Caco-2 (cell line): ENCODE measurements at regions of chr12 and their contacts with region 1.

Region 1: DNA sequence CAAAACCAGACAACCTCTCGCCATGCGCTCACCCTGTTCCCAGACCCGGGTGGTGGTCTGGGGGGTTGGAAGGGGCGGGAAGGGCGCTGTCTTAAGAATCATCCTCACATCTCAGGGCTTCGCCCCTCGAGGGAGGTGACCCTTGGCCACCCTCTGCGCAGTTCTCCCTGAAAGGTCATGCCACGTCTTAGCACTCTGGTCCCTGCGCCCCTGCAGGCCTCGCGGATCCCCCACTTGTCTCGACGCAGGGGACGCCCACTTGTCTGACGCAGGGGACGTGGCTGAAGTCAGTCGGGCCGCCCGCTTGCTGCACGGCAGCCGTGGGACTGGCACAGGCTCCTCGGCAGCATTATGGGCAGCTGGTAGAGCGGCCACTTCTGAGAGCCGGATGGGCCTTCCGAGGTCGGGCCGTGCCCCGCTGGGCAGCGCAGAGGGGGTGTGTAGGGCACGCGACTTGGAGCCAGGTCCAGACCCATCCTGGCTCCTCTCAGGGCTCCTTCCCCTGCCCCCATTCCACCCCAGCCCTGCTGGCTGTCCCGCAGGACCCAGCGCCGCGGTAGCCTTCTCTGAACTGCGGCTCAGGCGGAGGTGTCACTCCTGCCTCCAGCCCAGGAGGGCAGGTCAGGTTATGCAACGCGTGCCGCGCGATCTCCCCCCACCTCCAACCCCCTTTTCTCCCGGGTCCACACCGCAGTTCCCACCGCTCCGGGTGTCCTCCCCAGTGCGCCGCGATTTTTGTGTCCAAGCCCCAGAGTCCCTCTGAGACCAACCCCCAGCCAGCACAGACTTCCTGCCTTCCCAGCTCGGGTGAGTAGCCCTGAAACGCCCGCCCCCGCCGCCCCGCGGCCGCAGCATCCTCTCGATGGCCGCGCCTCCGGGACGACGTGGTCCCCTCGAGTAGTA is 40.9 kb upstream of the CAPRIN2 start:
- DNase-seq: peak; percentile 75 to 76
- H3K4me3 ChIP-seq: peak overlapping the region; percentile 75
- H3K4me3 Mint-ChIP-seq: peak overlapping the region; percentile 80
- H3K27ac Mint-ChIP-seq: no peak overlapping the region
- H3K4me1 ChIP-seq: peaks cover 34% of the 10 kb centered on the region
- H3K4me1 Mint-ChIP-seq: peaks cover 25% of the 10 kb centered on the region
- H3K27me3 ChIP-seq: no peaks in the 10 kb centered on the region
- H3K27me3 Mint-ChIP-seq: peaks cover 3% of the 10 kb centered on the region
- CTCF ChIP-seq: no peak

Region 2: GRCh38 chr12:30500532-30501209 is 295.0 kb before region 1 on chr12:
- CTCF ChIA-PET with region 1: no interaction called
- POLR2A ChIA-PET with region 1: no interaction called
- intact Hi-C with region 1: loop called (anchors 10 kb)
- DNase-seq: no peak
- H3K4me3 ChIP-seq: no peak overlapping the region
- H3K4me3 Mint-ChIP-seq: no peak overlapping the region
- H3K27ac Mint-ChIP-seq: no peak overlapping the region
- H3K4me1 ChIP-seq: peaks cover 10% of the 10 kb centered on the region; the same call in 1 of the 2 replicates
- H3K4me1 Mint-ChIP-seq: peaks cover 8% of the 10 kb centered on the region
- H3K27me3 ChIP-seq: no peaks in the 10 kb centered on the region
- H3K27me3 Mint-ChIP-seq: no peaks in the 10 kb centered on the region
- CTCF ChIP-seq: no peak

Region 3: GRCh38 chr12:30763053-30763452 is 32.6 kb before region 1 on chr12:
- CTCF ChIA-PET with region 1: interaction called, 3 read pairs
- POLR2A ChIA-PET with region 1: interaction called, 3 read pairs
- intact Hi-C with region 1: loop called (anchors 1 kb)
- DNase-seq: peak; percentile 84 to 94
- H3K4me3 ChIP-seq: no peak overlapping the region
- H3K4me3 Mint-ChIP-seq: peak overlapping the region; percentile 3
- H3K27ac Mint-ChIP-seq: peak overlapping the region; percentile 78
- H3K4me1 ChIP-seq: peaks cover 26% of the 10 kb centered on the region
- H3K4me1 Mint-ChIP-seq: peaks cover 41% of the 10 kb centered on the region
- H3K27me3 ChIP-seq: no peaks in the 10 kb centered on the region
- H3K27me3 Mint-ChIP-seq: no peaks in the 10 kb centered on the region
- CTCF ChIP-seq: no peak